CD4-positive, alpha-beta T cell (primary cell): ENCODE measurements at regions of chr6 and their contacts with region 1.

Region 1: GRCh38 chr6:78995946-78996345 is 82.1 kb downstream of the PHIP start:
- DNase-seq: no peak
- ATAC-seq: no peak
- H3K4me3 ChIP-seq: no peak overlapping the region
- H3K4me3 Mint-ChIP-seq: no peak overlapping the region
- H3K27ac ChIP-seq: no peak overlapping the region
- H3K27ac Mint-ChIP-seq: no peak overlapping the region
- H3K4me1 ChIP-seq: no peaks in the 10 kb centered on the region
- H3K4me1 Mint-ChIP-seq: no peaks in the 10 kb centered on the region
- H3K27me3 ChIP-seq: no peaks in the 10 kb centered on the region
- H3K27me3 Mint-ChIP-seq: no peaks in the 10 kb centered on the region
- CTCF ChIP-seq: no peak

Region 2: GRCh38 chr6:78954740-78955139 is 41.2 kb before region 1 on chr6:
- CTCF ChIA-PET with region 1: no interaction called
- POLR2A ChIA-PET with region 1: no interaction called
- intact Hi-C with region 1: loop called in 1 of 2 experiments (anchors 5 kb)
- DNase-seq: no peak
- ATAC-seq: no peak
- H3K4me3 ChIP-seq: no peak overlapping the region
- H3K4me3 Mint-ChIP-seq: no peak overlapping the region
- H3K27ac ChIP-seq: no peak overlapping the region
- H3K27ac Mint-ChIP-seq: no peak overlapping the region
- H3K4me1 ChIP-seq: no peaks in the 10 kb centered on the region
- H3K4me1 Mint-ChIP-seq: no peaks in the 10 kb centered on the region
- H3K27me3 ChIP-seq: no peaks in the 10 kb centered on the region
- H3K27me3 Mint-ChIP-seq: no peaks in the 10 kb centered on the region
- CTCF ChIP-seq: no peak

Region 3: GRCh38 chr6:79056226-79056625 is 60.3 kb after region 1 on chr6:
- CTCF ChIA-PET with region 1: no interaction called
- POLR2A ChIA-PET with region 1: no interaction called
- intact Hi-C with region 1: loop called in 1 of 2 experiments (anchors 10 kb)
- DNase-seq: no peak
- ATAC-seq: no peak
- H3K4me3 ChIP-seq: no peak overlapping the region
- H3K4me3 Mint-ChIP-seq: no peak overlapping the region
- H3K27ac ChIP-seq: no peak overlapping the region
- H3K27ac Mint-ChIP-seq: peak overlapping the region; percentile 37
- H3K4me1 ChIP-seq: no peaks in the 10 kb centered on the region
- H3K4me1 Mint-ChIP-seq: peaks cover 31% of the 10 kb centered on the region
- H3K27me3 ChIP-seq: no peaks in the 10 kb centered on the region
- H3K27me3 Mint-ChIP-seq: no peaks in the 10 kb centered on the region
- CTCF ChIP-seq: no peak

Region 4: GRCh38 chr6:79208816-79209215 is 212.9 kb after region 1 on chr6:
- CTCF ChIA-PET with region 1: no interaction called
- POLR2A ChIA-PET with region 1: no interaction called
- intact Hi-C with region 1: no loop called
- DNase-seq: peak in 1 of 14 experiments; percentile 4
- ATAC-seq: no peak
- H3K4me3 ChIP-seq: no peak overlapping the region
- H3K4me3 Mint-ChIP-seq: no peak overlapping the region
- H3K27ac ChIP-seq: no peak overlapping the region
- H3K27ac Mint-ChIP-seq: no peak overlapping the region
- H3K4me1 ChIP-seq: no peaks in the 10 kb centered on the region
- H3K4me1 Mint-ChIP-seq: no peaks in the 10 kb centered on the region
- H3K27me3 ChIP-seq: no peaks in the 10 kb centered on the region
- H3K27me3 Mint-ChIP-seq: no peaks in the 10 kb centered on the region
- CTCF ChIP-seq: no peak